K562 (cell line): ENCODE measurements at regions of chr6 and their contacts with region 1.

Region 1: DNA sequence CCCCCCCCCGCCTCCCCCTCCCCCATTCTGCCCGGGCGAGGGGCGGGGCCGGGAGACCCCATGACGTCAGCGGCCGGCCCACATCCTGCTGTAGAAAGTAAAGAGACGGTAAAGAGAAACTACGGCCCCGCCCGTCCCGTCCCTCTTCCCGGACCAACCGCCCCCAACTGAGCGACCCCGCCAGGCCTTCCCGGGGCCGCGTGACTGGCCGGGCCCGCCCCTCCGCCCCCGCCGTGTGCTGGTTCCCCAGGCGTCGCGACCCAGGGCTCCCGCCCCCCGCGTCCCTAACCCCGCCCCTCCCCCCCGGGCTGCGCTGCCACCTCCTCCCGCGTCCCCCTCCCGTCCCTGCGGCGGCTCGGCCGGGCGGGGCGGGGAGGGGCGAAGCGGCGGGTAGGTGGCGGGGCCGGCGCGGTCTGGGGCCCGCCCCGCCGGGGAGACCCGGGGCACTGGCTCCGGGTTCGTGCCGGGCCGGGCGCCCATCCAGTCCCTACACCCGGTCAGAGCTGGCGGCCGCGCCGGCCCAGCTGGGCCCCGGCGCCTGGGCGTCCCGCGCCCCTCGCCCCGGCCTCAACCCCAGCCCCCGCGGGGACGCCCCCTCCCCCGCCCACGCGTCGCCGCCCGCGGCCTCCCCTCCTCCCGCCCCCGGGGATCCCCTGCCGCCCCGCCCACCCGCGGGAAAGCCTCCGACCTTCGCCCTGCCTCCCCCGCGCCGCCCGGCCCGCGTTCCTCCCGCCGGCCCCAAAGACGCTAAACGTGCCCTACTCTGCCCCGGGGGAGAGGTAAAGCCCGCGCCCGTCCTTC is 636 bp upstream of the HIVEP1 start:
- DNase-seq: peak; percentile 96 to 99 (median 98)
- ATAC-seq: peak; percentile 85
- H3K4me3 ChIP-seq: peak overlapping the region; percentile 73
- H3K27ac ChIP-seq: peak overlapping the region; percentile 99
- H3K4me1 ChIP-seq: peaks cover 19% of the 10 kb centered on the region in 2 experiments
- H3K27me3 ChIP-seq: no peaks in the 10 kb centered on the region; a peak in 1 of 5 replicates
- CTCF ChIP-seq: peak in 1 of 3 experiments; percentile 1; a peak in 1 of 6 replicates
- EP300 ChIP-seq: peak; percentile 44; the same call in 1 of the 2 replicates
- POLR2A ChIP-seq: no peak
- RAD21 ChIP-seq: no peak

Region 2: GRCh38 chr6:11779329-11780096 is 232.0 kb before region 1 on chr6:
- CTCF ChIA-PET with region 1: no interaction called
- POLR2A ChIA-PET with region 1: no interaction called
- in situ Hi-C with region 1: no loop called
- intact Hi-C with region 1: loop called (anchors 2 kb)
- DNase-seq: no peak
- ATAC-seq: peak; percentile 38
- H3K4me3 ChIP-seq: no peak overlapping the region
- H3K27ac ChIP-seq: peak overlapping the region; percentile 72; the same call in 1 of the 3 replicates
- H3K4me1 ChIP-seq: peaks cover 7 to 28% of the 10 kb centered on the region in 2 experiments
- H3K27me3 ChIP-seq: no peaks in the 10 kb centered on the region
- CTCF ChIP-seq: no peak
- EP300 ChIP-seq: no peak
- POLR2A ChIP-seq: no peak
- RAD21 ChIP-seq: no peak

Region 3: GRCh38 chr6:11921017-11921438 is 90.4 kb before region 1 on chr6:
- CTCF ChIA-PET with region 1: no interaction called
- POLR2A ChIA-PET with region 1: interaction called, 3 read pairs
- in situ Hi-C with region 1: no loop called
- intact Hi-C with region 1: loop called (anchors 1 kb)
- DNase-seq: peak; percentile 50 to 94 (median 74)
- ATAC-seq: peak; percentile 93
- H3K4me3 ChIP-seq: no peak overlapping the region
- H3K27ac ChIP-seq: peak overlapping the region; percentile 68
- H3K4me1 ChIP-seq: peaks cover 31 to 54% of the 10 kb centered on the region in 2 experiments
- H3K27me3 ChIP-seq: no peaks in the 10 kb centered on the region
- CTCF ChIP-seq: no peak
- EP300 ChIP-seq: no peak; the same call in 1 of the 2 replicates
- POLR2A ChIP-seq: peak; percentile 64
- RAD21 ChIP-seq: no peak; a peak in 1 of 4 replicates

Region 4: DNA sequence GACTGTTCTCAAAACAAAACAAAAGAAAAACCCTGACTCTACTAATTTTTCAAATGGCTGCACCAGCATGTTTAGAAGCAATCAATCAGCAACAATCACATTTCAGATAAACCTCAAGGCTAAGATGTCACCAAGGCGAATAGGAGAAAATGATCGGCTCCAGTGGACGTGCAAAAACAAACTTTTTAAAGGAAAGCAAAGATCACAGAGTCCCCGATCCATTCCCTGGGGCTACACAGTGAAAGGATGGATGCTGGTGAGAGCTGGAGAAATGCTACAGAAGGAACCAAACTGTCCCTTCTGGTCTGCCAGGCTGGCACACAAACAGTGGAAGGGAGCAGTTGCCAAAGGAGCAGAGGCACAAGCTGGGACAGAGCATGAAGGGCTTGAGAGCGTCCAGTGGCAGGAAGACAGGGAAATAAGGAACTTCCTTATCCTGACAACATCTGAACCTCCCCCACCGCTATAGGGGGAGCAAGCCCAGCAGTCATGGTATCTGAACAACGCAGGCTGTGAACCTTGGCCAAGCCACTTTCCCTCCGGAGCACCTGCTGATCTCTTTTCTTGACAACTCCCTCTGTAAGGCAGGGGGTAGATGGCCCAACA is 73.1 kb before region 1 on chr6:
- CTCF ChIA-PET with region 1: no interaction called
- POLR2A ChIA-PET with region 1: no interaction called
- in situ Hi-C with region 1: loop called (anchors 5 kb)
- intact Hi-C with region 1: loop called (anchors 2 kb)
- DNase-seq: peak; percentile 90 to 99 (median 92)
- ATAC-seq: peak; percentile 93
- H3K4me3 ChIP-seq: peak overlapping the region; percentile 23; the same call in 1 of the 2 replicates
- H3K27ac ChIP-seq: peak overlapping the region; percentile 79
- H3K4me1 ChIP-seq: peaks cover 12 to 28% of the 10 kb centered on the region in 2 experiments; a peak in 4 of 5 replicates
- H3K27me3 ChIP-seq: no peaks in the 10 kb centered on the region
- CTCF ChIP-seq: 0 out of 6 replicates have a peak, but pooled peaks of 1 of the 3 experiments have one; percentile 1
- EP300 ChIP-seq: peak; percentile 99
- POLR2A ChIP-seq: peak; percentile 56; the same call in 1 of the 2 replicates
- RAD21 ChIP-seq: peak; percentile 49 to 67

Region 5: DNA sequence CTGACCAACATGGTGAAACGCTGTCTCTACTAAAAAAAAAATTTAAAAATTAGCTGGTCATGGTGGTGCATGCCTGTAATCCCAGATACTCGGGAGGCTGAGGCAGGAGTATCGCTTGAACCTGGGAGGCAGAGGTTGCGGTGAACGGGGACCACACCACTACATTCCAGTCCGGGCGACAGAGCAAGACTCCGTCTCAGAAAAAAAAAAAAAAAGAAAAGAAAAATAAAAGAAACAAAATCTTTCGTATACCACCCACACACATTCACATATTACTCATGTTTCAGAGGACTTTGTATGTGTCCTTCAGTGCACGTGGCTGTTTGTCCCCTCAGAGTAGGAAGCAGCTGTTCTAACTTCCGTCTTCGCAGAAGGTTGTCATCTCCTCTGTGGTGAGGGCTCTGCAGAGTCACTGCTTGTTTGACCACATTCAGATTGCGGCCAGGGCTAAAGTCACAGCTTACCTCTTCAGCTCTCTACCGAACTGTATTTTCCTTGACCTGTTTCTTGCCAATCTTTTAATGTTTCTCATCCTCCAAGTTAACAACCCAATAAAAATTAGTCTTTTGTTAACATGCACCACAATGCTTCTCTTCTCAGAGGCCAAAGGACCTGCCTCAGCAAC is 36.0 kb before region 1 on chr6:
- CTCF ChIA-PET with region 1: no interaction called
- POLR2A ChIA-PET with region 1: no interaction called
- in situ Hi-C with region 1: no loop called
- intact Hi-C with region 1: loop called (anchors 2 kb)
- DNase-seq: peak; percentile 33 to 73 (median 54)
- ATAC-seq: peak; percentile 77
- H3K4me3 ChIP-seq: no peak overlapping the region
- H3K27ac ChIP-seq: peak overlapping the region; percentile 15; the same call in 1 of the 3 replicates
- H3K4me1 ChIP-seq: peaks cover 3 to 22% of the 10 kb centered on the region in 2 experiments; a peak in 4 of 5 replicates
- H3K27me3 ChIP-seq: no peaks in the 10 kb centered on the region
- CTCF ChIP-seq: no peak
- EP300 ChIP-seq: peak; percentile 45; the same call in 1 of the 2 replicates
- POLR2A ChIP-seq: no peak
- RAD21 ChIP-seq: 0 out of 4 replicates have a peak, but pooled peaks of 1 of the 2 experiments have one; percentile 10